ENCODE measurements at regions of chr7 and their contacts with region 1.

Region 1: GRCh38 chr7:135147899-135148721 is at the start of gene TMEM140:
- DNase-seq: peak; percentile 80 to 94 (median 88)
- H3K4me3 ChIP-seq: peak within 1 kb of the TSS in 6 of 7 experiments; percentile 63 to 92 (median 82)
- H3K27ac ChIP-seq: peak within 1 kb of the TSS; percentile 85 to 92
- H3K4me1 ChIP-seq: peaks cover 47 to 75% (median 55%) of the 10 kb centered on the region in 4 experiments
- H3K27me3 ChIP-seq: no peaks in the 10 kb centered on the region

Region 2: GRCh38 chr7:134986363-134987251 is 161.5 kb before region 1 on chr7 and contains the start of gene AGBL3:
- CTCF ChIA-PET with region 1: interaction called, 13 read pairs
- POLR2A ChIA-PET with region 1: interaction called, 3 read pairs
- DNase-seq: peak; percentile 92 to 94 (median 94)
- H3K4me3 ChIP-seq: peak within 1 kb of the TSS; percentile 85 to 99 (median 95)
- H3K27ac ChIP-seq: peak within 1 kb of the TSS; percentile 87 to 95
- H3K4me1 ChIP-seq: peaks cover 0 to 12% (median 2%) of the 10 kb centered on the region in 4 experiments
- H3K27me3 ChIP-seq: no peaks in the 10 kb centered on the region

Region 3: DNA sequence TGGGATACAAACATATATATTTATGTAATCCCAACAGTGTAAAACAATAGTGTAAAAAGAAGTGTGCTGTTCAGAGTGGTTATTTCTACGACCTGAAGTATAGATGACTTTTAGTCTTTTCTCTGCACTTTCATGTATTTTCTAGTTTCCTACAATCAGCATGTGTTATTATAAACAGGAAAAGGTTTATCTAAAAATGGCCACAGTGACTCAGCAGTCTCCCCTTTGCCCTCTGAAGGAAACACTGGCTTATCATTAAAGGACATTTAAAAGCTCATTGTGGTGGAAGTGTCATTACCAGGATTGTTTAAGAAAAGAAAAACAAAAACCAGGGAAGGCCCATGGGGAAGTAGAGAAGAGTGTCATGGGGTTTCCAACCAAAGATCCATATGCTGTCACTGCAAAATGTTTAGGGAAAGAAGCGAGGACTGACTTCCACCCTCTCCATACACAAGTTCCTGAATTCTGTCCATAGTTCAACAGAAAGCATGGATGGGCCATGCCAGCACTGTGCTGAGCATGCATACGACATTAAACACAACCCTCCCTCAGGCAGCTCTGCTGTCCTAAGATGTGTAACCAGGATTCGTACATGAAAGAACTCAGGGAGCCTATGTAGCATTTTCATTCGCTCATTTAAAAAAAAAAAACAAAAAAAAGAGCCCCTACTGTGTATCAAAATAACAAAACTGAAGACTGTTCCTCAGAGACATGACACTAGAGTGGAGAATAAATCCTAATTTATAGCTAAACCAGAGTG is 12.2 kb after region 1 on chr7:
- CTCF ChIA-PET with region 1: interaction called, 182 read pairs
- POLR2A ChIA-PET with region 1: interaction called, 12 read pairs
- DNase-seq: peak; percentile 85 to 92 (median 91)
- H3K4me3 ChIP-seq: peak overlapping the region in 3 of 7 experiments; percentile 21 to 33 (median 27)
- H3K27ac ChIP-seq: peak overlapping the region; percentile 83 to 95
- H3K4me1 ChIP-seq: peaks cover 27 to 70% (median 47%) of the 10 kb centered on the region in 4 experiments
- H3K27me3 ChIP-seq: no peaks in the 10 kb centered on the region

Region 4: GRCh38 chr7:135170274-135170997 is 22.3 kb after region 1 on chr7 and contains the start of gene CYREN:
- CTCF ChIA-PET with region 1: interaction called, 182 read pairs
- POLR2A ChIA-PET with region 1: interaction called, 11 read pairs
- DNase-seq: peak; percentile 79 to 86 (median 85)
- H3K4me3 ChIP-seq: peak within 1 kb of the TSS; percentile 73 to 93 (median 81)
- H3K27ac ChIP-seq: peak within 1 kb of the TSS; percentile 77 to 90
- H3K4me1 ChIP-seq: peaks cover 17 to 61% (median 47%) of the 10 kb centered on the region in 4 experiments
- H3K27me3 ChIP-seq: no peaks in the 10 kb centered on the region